Activated T-helper 2 cell treated with anti-CD3 and anti-CD28 coated beads, Interferon-gamma antibody, Interleukin-2, Interleukin-4, amounts not matched to agents 10 μg/mL and 5 μg/mL and 100 μg/mL, durations not matched to agents 14 hours and 24 hours and 36 hours (primary cell): ENCODE measurements at regions of chr5 and their contacts with region 1.

Region 1: GRCh38 chr5:138464008-138464387 is 1.3 kb upstream of the EGR1 start:
- DNase-seq: peak; percentile 90
- H3K4me3 Mint-ChIP-seq: peak overlapping the region; percentile 85
- H3K27ac Mint-ChIP-seq: peak overlapping the region; percentile 92
- H3K4me1 Mint-ChIP-seq: peaks cover 48% of the 10 kb centered on the region
- H3K27me3 Mint-ChIP-seq: no peaks in the 10 kb centered on the region

Region 2: GRCh38 chr5:138011991-138012390 is 452.0 kb before region 1 on chr5:
- intact Hi-C with region 1: no loop called
- DNase-seq: no peak
- H3K4me3 Mint-ChIP-seq: no peak overlapping the region
- H3K27ac Mint-ChIP-seq: no peak overlapping the region
- H3K4me1 Mint-ChIP-seq: peaks cover 15% of the 10 kb centered on the region
- H3K27me3 Mint-ChIP-seq: no peaks in the 10 kb centered on the region

Region 3: GRCh38 chr5:138337685-138338410 is 126.2 kb before region 1 on chr5 and contains the start of gene FAM53C:
- intact Hi-C with region 1: loop called (anchors 5 kb)
- DNase-seq: peak; percentile 91
- H3K4me3 Mint-ChIP-seq: peak within 1 kb of the TSS; percentile 91
- H3K27ac Mint-ChIP-seq: peak within 1 kb of the TSS; percentile 98
- H3K4me1 Mint-ChIP-seq: peaks cover 37% of the 10 kb centered on the region
- H3K27me3 Mint-ChIP-seq: no peaks in the 10 kb centered on the region
- total RNA-seq, gene FAM53C: 24.4 and 26.1 TPM in 2 replicates

Region 4: DNA sequence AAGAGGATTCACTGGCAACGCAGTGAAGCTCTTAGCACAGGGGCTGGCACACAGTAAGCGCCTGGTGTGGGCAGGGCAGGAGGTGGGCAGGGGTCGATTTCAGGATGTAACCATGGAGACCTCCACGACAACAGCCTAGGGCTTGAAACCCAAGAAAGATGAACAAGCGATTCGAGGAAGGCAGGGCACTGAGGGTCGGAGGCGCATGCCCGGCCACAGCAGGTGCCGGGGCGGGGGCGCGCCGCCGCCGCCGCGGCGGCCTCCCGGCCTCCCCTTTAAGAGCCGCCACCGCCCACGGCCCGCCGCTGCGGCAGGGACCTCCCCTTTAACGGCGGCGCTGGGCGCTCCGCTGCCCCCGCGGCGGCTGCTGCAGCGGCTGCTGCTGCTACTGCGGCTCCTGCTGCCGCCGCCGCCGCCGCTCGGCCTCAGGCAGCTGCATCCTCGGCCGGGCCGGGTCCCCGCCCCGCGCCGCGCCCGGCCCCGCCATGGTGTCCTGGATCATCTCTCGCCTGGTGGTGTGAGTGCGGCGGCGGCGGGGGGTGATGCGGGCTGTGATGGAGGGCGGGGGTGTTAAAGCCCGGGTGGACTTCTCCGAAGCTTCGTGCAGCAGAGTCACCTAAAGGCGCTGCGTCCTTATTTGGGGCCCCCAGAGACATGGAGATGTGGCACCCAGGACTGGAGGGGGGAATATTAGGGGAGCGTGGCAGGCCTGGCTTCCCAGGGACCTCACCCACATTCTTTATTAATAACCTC is 25.1 kb before region 1 on chr5 and contains the start of gene REEP2:
- intact Hi-C with region 1: no loop called
- DNase-seq: peak; percentile 53
- H3K4me3 Mint-ChIP-seq: peak within 1 kb of the TSS; percentile 79
- H3K27ac Mint-ChIP-seq: peak within 1 kb of the TSS; percentile 13
- H3K4me1 Mint-ChIP-seq: peaks cover 15% of the 10 kb centered on the region
- H3K27me3 Mint-ChIP-seq: no peaks in the 10 kb centered on the region
- total RNA-seq, gene REEP2: 9.7 and 11.1 TPM in 2 replicates

Region 5: DNA sequence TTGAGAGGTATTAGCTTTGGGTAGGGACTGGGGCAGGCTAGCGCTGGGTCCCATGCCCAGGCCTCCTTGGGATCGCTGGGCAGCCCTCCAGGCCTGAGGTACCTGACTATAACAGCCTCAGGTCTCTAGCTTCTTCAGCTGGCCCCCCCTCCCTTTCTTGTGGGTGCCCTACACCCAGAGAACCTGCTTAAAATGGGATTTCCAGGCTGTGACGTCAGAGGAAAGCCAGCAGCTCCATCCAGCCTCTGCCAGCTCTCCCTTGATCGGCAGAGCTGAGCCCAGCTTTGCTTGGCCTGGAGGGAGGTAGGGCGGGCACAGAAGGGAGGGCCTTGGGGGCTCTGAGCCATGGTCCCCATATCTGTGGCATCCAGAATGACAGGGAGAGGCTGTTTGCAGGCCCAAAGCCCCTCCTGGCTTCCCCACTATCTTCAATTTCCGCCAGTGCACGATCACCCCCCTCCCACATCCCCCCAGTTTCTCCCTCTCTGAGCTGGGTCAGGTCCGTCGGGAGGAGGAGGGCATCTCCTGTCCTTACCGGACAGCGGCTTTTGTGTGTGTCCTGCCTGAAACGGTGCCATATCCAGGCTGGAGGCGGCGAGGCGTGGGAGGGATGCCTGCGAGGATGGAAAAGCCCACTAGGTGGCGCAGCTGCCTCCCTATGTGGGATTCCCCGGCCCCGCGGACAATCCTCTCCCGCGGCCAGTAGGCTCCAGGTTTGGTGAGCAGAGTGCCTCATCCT is 14.3 kb before region 1 on chr5:
- intact Hi-C with region 1: loop called (anchors 1 kb)
- DNase-seq: peak; percentile 69
- H3K4me3 Mint-ChIP-seq: peak overlapping the region; percentile 39
- H3K27ac Mint-ChIP-seq: peak overlapping the region; percentile 19
- H3K4me1 Mint-ChIP-seq: peaks cover 6% of the 10 kb centered on the region
- H3K27me3 Mint-ChIP-seq: peaks cover 2% of the 10 kb centered on the region

Region 6: DNA sequence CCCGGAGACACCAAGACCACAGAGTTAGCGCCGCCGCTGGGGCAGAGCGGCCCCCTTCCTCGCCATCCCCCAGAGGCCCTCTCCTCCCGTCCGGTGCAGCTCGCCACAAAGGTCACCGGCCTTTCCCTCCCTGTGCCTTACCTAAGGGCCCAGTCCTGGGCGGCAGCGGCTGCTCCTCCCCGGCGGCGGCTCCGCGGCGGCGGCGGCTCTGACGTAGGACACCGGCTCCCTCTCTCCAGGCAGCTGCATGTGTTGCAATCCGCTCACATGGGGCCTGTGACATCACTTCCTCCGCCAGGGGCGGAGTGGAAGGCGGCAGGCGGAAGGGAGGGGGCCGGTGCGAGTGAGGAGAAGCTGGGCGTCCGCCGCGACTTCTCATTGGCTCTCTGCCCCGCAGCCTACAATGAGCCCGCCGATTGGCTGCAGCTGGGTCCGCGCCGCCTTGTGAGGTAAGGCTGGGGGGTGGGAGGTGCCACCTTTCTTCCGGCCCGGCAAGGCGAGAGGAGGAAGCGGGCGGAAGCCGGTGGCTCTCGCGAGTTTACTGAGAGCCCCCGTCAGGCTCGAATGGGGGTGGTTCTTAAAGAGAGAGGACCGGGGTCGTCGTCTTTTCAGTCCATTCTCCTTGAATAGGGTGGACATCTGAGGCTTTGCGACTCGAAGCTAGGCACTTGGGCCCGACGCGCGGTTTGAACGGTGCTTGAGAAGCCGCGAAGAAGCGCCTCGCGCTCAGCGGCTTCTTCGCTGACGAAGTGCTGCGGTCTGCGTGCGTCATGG is 79.1 kb after region 1 on chr5 and contains the start of gene ETF1:
- intact Hi-C with region 1: loop called (anchors 1 kb)
- DNase-seq: peak; percentile 100
- H3K4me3 Mint-ChIP-seq: peak within 1 kb of the TSS; percentile 100
- H3K27ac Mint-ChIP-seq: peak within 1 kb of the TSS; percentile 100
- H3K4me1 Mint-ChIP-seq: peaks cover 56% of the 10 kb centered on the region
- H3K27me3 Mint-ChIP-seq: no peaks in the 10 kb centered on the region
- total RNA-seq, gene ETF1: 169 and 170 TPM in 2 replicates

Region 7: DNA sequence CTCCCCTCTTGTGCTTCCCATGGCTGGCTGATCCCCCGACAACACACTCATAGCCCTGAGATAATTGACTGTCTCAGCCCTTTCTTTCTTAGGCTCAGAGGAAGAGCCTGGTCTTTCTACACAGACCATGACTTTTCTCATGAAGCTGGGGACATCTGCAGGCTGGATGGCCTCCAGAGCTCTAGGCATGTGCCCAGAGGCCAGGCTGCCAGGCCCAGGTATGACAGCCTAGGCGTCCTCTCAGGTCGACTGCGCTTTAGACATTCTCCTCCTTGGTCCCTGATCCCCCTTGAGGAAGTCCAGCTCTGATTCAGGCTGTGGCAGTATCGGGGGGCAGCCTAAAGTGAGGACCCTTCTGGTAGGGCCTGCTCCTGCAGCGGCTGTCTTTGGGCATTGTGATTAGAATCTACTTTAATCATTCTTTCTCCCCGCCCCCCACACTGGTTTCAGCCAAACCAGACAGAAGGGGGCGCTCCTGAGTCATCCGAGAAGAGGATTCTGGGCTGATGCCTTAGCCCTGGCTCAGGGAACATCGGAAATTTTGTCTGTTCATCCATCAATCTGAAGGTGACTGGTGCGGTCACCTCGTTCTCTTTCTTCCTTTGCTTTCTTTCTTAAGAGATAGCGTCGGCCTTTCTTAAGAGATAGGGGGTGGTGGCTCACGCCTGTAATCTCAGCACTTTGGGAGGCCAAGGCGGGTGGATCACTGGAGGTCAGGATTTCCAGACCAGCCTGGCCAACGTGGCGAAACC is 177.7 kb after region 1 on chr5:
- intact Hi-C with region 1: no loop called
- DNase-seq: peak; percentile 61
- H3K4me3 Mint-ChIP-seq: no peak overlapping the region
- H3K27ac Mint-ChIP-seq: no peak overlapping the region
- H3K4me1 Mint-ChIP-seq: no peaks in the 10 kb centered on the region
- H3K27me3 Mint-ChIP-seq: peaks cover 69% of the 10 kb centered on the region

Region 8: DNA sequence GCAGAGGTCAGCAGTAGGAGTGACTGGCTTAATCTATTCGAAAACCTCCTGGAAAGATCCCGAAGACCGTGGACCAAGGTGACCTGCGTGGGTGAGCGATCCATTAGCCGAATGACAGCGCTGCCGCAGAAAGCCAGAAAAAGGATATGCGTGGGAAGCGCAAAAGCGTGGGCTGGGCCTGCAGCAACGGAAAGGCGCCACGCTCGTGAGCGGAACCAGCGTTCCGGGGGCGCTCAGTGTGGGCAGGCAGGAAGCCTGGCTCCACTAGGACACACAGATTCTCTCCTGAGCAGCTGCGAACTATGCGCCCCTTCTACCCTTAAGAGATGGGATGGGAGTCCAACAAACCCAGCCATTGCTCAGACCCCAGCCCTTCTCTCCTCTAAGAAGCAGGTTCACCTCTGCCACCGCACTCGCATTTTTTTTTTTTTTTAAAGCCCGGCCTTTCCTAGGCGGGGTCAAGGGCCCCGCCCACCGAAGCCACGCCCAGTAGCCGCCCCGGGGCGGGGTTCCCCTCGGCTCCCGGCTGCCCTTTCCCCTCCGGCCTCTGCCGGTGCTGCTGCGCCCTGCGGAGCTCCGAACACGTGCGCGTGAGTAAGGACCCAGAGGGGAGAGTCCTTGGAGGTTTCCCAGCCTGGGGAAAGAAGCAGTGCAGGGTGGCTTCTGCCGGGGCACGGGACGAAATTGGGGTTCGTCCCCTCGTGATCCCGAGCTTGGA is 809.7 kb after region 1 on chr5:
- intact Hi-C with region 1: loop called (anchors 10 kb)
- DNase-seq: peak; percentile 88
- H3K4me3 Mint-ChIP-seq: peak overlapping the region; percentile 94
- H3K27ac Mint-ChIP-seq: peak overlapping the region; percentile 42
- H3K4me1 Mint-ChIP-seq: peaks cover 42% of the 10 kb centered on the region
- H3K27me3 Mint-ChIP-seq: no peaks in the 10 kb centered on the region